ENCODE measurements at regions of chr1 and their contacts with region 1.

Region 1: GRCh38 chr1:24201941-24202440 is 14.9 kb upstream of the IFNLR1 start:
- DNase-seq: peak; percentile 65 to 98 (median 81)
- ATAC-seq: peak; percentile 89
- H3K4me3 ChIP-seq: no peak overlapping the region
- H3K4me1 ChIP-seq: peaks cover 11% of the 10 kb centered on the region
- CTCF ChIP-seq: peak; percentile 57

Region 2: DNA sequence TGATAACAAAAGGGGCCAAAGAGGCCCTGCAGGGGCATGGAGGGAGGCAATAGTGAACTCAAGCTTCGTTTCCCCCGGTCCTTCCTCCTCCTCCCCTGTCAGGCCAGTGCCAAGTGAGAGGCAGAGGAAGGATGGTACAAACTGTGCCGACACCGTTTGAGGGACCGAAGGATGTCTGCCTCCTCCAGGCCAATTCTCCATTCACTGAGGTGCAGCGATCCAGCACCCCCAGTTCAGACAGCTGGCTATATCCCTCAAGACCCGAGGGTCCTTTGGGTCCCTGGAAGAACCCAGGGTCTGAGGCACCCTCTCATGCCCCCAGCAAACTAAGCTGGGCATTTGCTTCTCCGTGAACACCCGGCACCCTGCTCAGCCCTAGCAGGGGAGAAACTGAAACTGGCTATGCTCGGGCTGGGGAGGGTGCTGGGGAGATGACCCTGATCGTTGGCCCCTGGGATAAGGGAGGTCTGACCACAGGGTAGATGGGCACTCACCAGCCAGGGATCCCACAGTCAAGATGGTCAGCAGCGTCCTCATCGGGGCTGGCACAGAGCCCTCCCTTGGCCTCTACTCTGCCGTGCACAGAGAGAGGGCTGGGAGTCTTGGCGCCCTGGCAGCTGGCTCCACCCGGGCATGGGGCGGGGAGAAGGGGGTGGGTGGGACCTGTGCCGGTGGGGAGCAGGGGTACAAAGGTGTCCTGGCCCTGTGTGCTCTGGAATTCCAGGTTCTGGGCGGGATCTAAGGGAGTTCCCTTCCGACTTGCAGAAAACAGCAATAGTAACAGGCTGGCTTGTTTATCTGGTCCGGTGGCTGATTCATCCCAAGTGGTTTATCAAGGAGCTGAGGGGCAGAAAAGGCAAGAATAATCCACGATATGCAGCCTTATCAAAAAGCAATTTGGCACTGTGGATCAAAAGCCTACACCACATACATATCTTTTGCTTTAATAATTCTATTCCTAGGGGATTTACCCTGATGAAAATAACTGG is 59.2 kb before region 1 on chr1 and contains the start of gene IL22RA1:
- intact Hi-C with region 1: no loop called
- DNase-seq: peak; percentile 85 to 87 (median 86)
- ATAC-seq: peak; percentile 94
- H3K4me3 ChIP-seq: peak within 1 kb of the TSS; percentile 11
- H3K4me1 ChIP-seq: peaks cover 11% of the 10 kb centered on the region
- CTCF ChIP-seq: no peak
- total RNA-seq, gene IL22RA1: 13.8 to 43.1 (median 28.2) TPM

Region 3: DNA sequence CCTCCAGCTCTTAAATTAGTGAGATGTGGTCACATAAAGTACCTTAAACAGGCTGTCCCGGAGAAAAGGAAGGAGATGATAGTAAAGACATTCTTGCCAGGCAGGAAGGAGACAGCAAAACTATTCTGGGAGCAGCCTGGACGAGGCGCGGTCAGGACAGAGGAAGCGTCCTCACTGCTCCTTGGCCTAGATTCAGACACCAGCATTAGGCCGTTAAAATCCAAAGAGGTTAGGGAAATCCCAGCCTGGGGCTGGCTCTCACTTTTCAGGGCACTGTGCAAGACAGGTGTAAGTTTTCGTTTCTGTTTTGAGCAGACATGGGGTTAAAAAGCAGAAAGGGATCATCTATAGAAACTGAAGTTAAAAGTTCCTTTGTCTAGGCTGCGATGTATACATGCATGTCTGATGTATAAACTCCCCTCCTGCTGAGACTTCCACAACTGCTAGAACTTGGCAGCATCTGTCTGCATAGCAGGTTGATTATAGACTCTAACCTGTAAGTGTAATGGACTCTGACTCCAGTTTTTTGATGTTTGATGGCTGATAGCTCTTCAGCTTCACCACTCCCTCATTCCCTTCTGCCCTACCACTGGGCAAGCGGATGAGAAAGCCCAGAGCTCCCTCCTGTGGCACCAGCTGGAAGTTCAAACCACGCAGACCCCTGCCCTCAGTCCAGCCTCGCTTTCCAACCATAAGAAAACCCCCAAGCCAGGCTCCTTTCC is 190.1 kb after region 1 on chr1:
- intact Hi-C with region 1: loop called (anchors 2 to 5 kb)
- DNase-seq: peak; percentile 70 to 78 (median 76)
- ATAC-seq: peak; percentile 87
- H3K4me3 ChIP-seq: no peak overlapping the region
- H3K4me1 ChIP-seq: peaks cover 14% of the 10 kb centered on the region
- CTCF ChIP-seq: peak; percentile 79

Measured in mucosa of descending colon (tissue), 3 donors.